B cell (primary cell): ENCODE measurements at regions of chr10 and their contacts with region 1.

Region 1: DNA sequence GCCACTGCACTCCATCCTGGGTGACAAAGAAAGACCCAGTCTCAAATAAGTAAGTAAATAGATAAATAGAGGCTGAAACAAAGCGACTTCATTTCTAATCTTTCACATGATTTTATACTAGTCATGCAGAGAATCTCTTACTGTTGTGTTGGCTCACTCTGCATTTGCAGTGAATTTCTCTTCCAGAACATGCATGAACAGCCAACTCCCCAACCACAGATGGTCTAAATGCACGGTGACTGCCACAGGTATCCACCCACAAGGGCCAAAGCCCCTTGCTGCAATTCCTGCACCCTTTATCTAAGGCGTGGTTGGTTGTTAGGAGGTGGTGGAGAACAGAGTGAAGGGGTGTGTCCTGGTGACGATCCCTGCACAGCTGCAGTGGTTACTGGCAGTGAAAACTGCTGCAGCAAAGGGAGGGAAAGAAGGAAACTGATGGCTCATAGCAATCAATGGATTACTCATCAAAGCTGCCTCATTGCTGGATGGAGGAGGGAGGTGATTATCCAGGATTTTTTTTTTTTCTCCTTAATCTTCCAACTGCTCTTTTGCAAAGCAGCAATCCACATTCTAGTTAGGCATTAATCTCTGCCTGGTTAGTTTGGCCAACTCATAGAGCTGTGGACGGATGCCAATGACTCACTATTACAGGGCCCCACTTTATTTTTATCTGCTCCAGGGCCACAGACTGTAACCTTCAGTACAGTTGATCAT is 50.6 kb downstream of the PRTFDC1 start:
- DNase-seq: no peak
- ATAC-seq: no peak
- H3K4me3 ChIP-seq: no peak overlapping the region
- H3K4me3 Mint-ChIP-seq: peak overlapping the region; percentile 51
- H3K27ac ChIP-seq: peak overlapping the region; percentile 48 to 68
- H3K27ac Mint-ChIP-seq: peak overlapping the region; percentile 88
- H3K4me1 ChIP-seq: peaks cover 26% of the 10 kb centered on the region in 2 donors
- H3K4me1 Mint-ChIP-seq: peaks cover 24% of the 10 kb centered on the region
- H3K27me3 ChIP-seq: no peaks in the 10 kb centered on the region
- H3K27me3 Mint-ChIP-seq: no peaks in the 10 kb centered on the region
- CTCF ChIP-seq: no peak

Region 2: DNA sequence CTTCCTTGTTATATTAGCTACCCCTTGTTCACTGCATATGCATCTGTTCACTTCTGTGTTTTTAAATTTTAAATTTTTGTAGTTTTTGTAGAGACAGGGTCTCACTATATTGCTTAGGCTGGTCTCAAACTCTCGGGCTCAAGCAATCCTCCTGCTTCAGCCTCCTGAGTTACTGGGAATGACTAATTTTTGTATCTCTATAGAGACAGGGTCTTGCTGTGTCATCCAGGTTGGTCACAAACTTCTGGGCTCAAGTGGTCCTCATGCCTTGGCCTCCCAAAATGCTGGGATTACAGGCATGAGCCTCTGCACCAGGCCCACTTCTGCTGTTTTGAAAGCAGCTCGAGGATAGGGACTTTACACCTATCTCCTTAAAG is 14.0 kb before region 1 on chr10:
- CTCF ChIA-PET with region 1: interaction called, 4 read pairs
- POLR2A ChIA-PET with region 1: no interaction called
- intact Hi-C with region 1: loop called (anchors 2 kb)
- DNase-seq: no peak
- ATAC-seq: peak; percentile 5
- H3K4me3 ChIP-seq: peak overlapping the region in 2 of 5 experiments; percentile 11 to 37
- H3K4me3 Mint-ChIP-seq: peak overlapping the region; percentile 64
- H3K27ac ChIP-seq: peak overlapping the region in 1 of 2 donors; percentile 74
- H3K27ac Mint-ChIP-seq: peak overlapping the region; percentile 60
- H3K4me1 ChIP-seq: peaks cover 20 to 37% of the 10 kb centered on the region in 2 donors
- H3K4me1 Mint-ChIP-seq: peaks cover 44% of the 10 kb centered on the region
- H3K27me3 ChIP-seq: no peaks in the 10 kb centered on the region
- H3K27me3 Mint-ChIP-seq: no peaks in the 10 kb centered on the region
- CTCF ChIP-seq: no peak

Region 3: GRCh38 chr10:25157650-25158049 is 255.8 kb after region 1 on chr10:
- CTCF ChIA-PET with region 1: no interaction called
- POLR2A ChIA-PET with region 1: no interaction called
- intact Hi-C with region 1: no loop called
- DNase-seq: no peak
- ATAC-seq: no peak
- H3K4me3 ChIP-seq: no peak overlapping the region
- H3K4me3 Mint-ChIP-seq: no peak overlapping the region
- H3K27ac ChIP-seq: no peak overlapping the region
- H3K27ac Mint-ChIP-seq: no peak overlapping the region
- H3K4me1 ChIP-seq: no peaks in the 10 kb centered on the region
- H3K4me1 Mint-ChIP-seq: no peaks in the 10 kb centered on the region
- H3K27me3 ChIP-seq: no peaks in the 10 kb centered on the region
- H3K27me3 Mint-ChIP-seq: no peaks in the 10 kb centered on the region
- CTCF ChIP-seq: no peak

Region 4: DNA sequence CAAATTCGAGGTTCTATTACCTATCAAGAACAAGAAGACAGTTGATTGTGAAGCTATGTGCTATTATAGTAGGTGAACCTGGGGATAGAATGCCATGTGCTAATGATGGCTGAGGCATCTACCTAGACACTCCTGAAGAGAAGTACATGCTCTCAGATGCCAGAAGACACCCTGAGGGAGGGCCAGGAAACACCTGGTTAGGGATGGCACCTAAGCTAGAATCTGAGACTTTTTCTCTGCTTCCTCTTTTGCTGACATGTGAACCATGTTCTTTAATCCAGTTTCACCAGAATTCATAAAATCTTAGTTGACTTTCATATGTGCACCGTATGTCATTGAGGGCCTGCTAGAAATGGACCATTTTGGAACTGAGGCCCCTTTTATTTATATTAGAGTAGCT is 515.8 kb after region 1 on chr10:
- CTCF ChIA-PET with region 1: no interaction called
- POLR2A ChIA-PET with region 1: no interaction called
- intact Hi-C with region 1: no loop called
- DNase-seq: no peak
- ATAC-seq: no peak
- H3K4me3 ChIP-seq: no peak overlapping the region
- H3K4me3 Mint-ChIP-seq: no peak overlapping the region
- H3K27ac ChIP-seq: no peak overlapping the region
- H3K27ac Mint-ChIP-seq: no peak overlapping the region
- H3K4me1 ChIP-seq: no peaks in the 10 kb centered on the region
- H3K4me1 Mint-ChIP-seq: no peaks in the 10 kb centered on the region
- H3K27me3 ChIP-seq: no peaks in the 10 kb centered on the region
- H3K27me3 Mint-ChIP-seq: no peaks in the 10 kb centered on the region
- CTCF ChIP-seq: no peak